GM10248 (cell line): ENCODE measurements at regions of chr11 and their contacts with region 1.

Region 1: GRCh38 chr11:95254131-95254704 is 23.2 kb upstream of the SESN3 start:
- DNase-seq: peak; percentile 70
- CTCF ChIP-seq: no peak

Region 2: DNA sequence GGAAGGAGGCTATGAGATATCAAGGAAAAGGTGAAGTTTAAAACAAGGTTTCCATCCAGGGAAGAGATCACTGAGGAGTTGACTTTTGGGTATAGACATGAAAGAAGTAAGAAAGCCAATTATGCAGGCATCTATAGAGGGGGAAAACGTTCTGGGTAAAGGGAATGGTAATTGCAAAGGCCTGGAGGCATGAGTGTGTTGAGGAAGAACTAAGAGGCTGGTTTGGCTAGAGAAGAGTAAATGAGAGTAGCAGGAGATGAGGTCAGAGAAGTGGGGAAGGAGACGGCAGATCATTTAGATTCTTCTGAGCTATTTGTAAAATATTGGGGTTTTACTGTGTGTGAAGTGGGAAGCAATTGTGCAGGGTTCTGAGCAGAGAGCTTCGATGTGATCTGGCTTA is 157.0 kb before region 1 on chr11:
- CTCF ChIA-PET with region 1: no interaction called
- POLR2A ChIA-PET with region 1: no interaction called
- DNase-seq: no peak
- CTCF ChIP-seq: no peak

Region 3: DNA sequence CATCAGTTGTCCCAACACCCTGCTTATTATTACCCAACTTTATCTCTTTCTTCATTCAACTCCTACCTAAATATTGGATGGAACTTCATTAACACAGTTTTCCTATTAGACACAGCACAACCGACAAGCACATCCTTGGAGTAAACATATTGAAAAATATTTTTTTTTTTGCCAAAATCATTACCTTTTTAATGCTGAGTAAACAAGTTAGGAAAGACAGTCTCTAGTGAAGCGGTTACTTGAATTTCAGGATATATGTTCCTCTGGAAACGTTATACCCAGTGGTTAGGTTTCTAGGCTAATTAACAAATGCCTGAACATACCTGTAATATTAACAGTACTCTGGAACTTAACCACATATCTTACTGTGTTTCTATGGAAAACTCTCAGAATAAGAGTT is 34.6 kb before region 1 on chr11:
- CTCF ChIA-PET with region 1: no interaction called
- POLR2A ChIA-PET with region 1: no interaction called
- DNase-seq: no peak
- CTCF ChIP-seq: no peak

Region 4: GRCh38 chr11:95231127-95231880 is 22.9 kb before region 1 on chr11 and contains the start of gene SESN3:
- CTCF ChIA-PET with region 1: interaction called, 9 read pairs
- POLR2A ChIA-PET with region 1: interaction called, 10 read pairs
- DNase-seq: peak; percentile 93
- CTCF ChIP-seq: no peak

Region 5: DNA sequence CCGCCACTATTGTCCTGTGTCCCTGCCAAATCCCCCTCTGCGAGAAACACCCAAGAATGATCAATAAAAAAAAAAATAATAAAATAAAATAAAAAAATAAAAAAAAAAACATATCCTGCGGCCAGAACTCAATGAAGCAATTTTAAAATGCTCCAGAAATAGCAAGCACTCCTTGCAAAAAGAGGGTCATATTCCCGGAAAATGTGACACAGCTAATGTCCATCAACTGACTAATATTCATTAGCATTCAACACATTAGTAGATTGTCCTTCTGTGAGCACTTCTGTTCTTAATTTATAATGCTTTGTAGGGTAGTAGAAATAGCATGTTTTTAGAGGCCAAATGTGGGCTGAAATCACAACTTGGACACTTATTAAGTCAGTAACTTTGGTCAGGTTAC is 229.1 kb after region 1 on chr11:
- CTCF ChIA-PET with region 1: no interaction called
- POLR2A ChIA-PET with region 1: no interaction called
- DNase-seq: no peak
- CTCF ChIP-seq: no peak